ENCODE measurements at regions of chr14 and their contacts with region 1.

Region 1: GRCh38 chr14:76876076-76876475 is 49.9 kb downstream of the LRRC74A start:
- DNase-seq: peak; percentile 68
- H3K4me3 ChIP-seq: no peak overlapping the region
- H3K27ac ChIP-seq: no peak overlapping the region
- H3K4me1 ChIP-seq: no peaks in the 10 kb centered on the region
- H3K27me3 ChIP-seq: no peaks in the 10 kb centered on the region
- CTCF ChIP-seq: peak; percentile 92 to 94
- POLR2A ChIP-seq: no peak

Region 2: GRCh38 chr14:76863724-76864407 is 12.2 kb before region 1 on chr14:
- CTCF ChIA-PET with region 1: interaction called, 13 read pairs
- POLR2A ChIA-PET with region 1: no interaction called
- dilution Hi-C with region 1: no loop called
- intact Hi-C with region 1: no loop called
- DNase-seq: peak; percentile 43
- H3K4me3 ChIP-seq: no peak overlapping the region
- H3K27ac ChIP-seq: no peak overlapping the region
- H3K4me1 ChIP-seq: peaks cover 12% of the 10 kb centered on the region
- H3K27me3 ChIP-seq: peaks cover 3% of the 10 kb centered on the region in 2 experiments
- CTCF ChIP-seq: no peak
- POLR2A ChIP-seq: no peak

Region 3: DNA sequence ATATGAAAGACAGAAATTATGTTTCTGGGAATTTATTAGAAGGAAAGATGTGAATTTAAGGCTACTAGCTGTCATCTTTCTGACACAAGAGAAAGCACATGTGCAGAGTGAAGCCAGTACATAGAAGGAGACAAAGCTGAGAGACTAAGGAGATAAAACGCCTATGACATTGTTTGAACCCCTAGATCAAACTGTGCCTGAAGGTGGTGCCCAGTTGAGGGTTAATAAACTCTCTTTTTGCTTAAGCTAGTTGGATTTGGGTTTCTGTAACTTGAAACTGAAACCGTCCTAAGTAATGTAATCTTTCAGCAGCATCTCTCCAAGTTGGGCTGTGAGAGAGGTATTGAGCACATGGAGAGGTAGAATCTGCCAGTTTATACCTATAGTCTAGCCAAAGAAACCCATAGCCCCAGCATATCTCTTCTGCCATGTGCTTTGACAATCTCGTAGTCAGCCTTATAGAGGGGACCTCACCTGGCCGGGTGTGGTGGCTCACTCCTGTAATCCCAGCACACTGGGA is 34.4 kb after region 1 on chr14:
- CTCF ChIA-PET with region 1: interaction called, 43 read pairs
- POLR2A ChIA-PET with region 1: interaction called, 12 read pairs
- dilution Hi-C with region 1: no loop called
- intact Hi-C with region 1: loop called (anchors 1 kb)
- DNase-seq: no peak
- H3K4me3 ChIP-seq: no peak overlapping the region
- H3K27ac ChIP-seq: no peak overlapping the region
- H3K4me1 ChIP-seq: peaks cover 3% of the 10 kb centered on the region
- H3K27me3 ChIP-seq: no peaks in the 10 kb centered on the region
- CTCF ChIP-seq: no peak
- POLR2A ChIP-seq: no peak

Region 4: DNA sequence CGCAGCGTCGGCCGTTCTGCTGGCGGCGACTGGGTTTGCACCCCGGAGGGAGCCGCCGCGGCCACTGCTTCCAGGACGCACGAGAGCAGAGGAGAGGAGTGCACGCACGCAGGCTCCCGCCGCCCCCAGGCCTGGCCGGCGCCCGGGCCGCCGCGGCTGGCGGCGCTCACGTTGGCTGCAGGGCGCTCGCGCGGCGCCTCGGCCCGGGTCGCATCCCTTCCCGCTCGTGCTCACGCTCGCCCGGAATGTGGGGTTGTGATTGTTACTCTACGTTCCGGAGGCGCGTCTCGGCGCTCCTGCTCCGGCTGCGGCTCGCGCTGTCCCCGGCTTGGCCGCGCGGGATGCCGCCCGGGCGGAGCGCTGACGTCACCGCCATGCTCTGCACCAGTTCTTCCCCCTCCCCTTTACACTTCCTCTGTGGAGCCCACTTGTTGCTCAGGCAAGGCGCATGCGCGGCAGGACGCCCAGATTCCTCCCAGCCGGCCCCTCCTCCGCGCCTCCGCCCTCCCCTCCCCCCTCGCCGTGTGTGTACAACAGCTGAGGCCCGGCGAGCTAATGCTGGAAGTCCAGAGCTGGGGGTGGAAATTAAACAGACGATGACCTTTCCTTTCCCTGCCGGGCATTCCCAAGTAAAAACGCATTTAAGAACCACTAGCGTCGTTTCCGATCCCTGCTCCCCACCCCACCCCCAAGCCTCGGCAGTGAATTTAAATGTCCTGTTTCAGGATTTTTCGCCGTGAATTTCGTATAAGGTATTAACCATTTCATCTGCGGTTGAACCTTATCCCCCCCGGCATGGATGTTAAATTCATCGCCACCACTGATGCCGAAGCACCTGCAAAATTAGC is 152.5 kb after region 1 on chr14 and contains the start of gene IRF2BPL:
- CTCF ChIA-PET with region 1: interaction called, 14 read pairs
- POLR2A ChIA-PET with region 1: no interaction called
- dilution Hi-C with region 1: no loop called
- intact Hi-C with region 1: no loop called
- DNase-seq: peak; percentile 99
- H3K4me3 ChIP-seq: peak within 1 kb of the TSS; percentile 24 to 90 (median 54)
- H3K27ac ChIP-seq: peak within 1 kb of the TSS; percentile 93
- H3K4me1 ChIP-seq: peaks cover 48% of the 10 kb centered on the region
- H3K27me3 ChIP-seq: no peaks in the 10 kb centered on the region
- CTCF ChIP-seq: no peak
- POLR2A ChIP-seq: peak; percentile 96
- total RNA-seq, gene IRF2BPL: 23.1 and 23.3 TPM in 2 replicates

Region 5: GRCh38 chr14:77067632-77068514 is 191.8 kb after region 1 on chr14:
- CTCF ChIA-PET with region 1: interaction called, 450 read pairs
- POLR2A ChIA-PET with region 1: no interaction called
- dilution Hi-C with region 1: no loop called
- intact Hi-C with region 1: loop called (anchors 1 kb)
- DNase-seq: peak; percentile 61
- H3K4me3 ChIP-seq: no peak overlapping the region
- H3K27ac ChIP-seq: no peak overlapping the region
- H3K4me1 ChIP-seq: no peaks in the 10 kb centered on the region
- H3K27me3 ChIP-seq: peaks cover 0 to 2% of the 10 kb centered on the region in 2 experiments
- CTCF ChIP-seq: peak; percentile 90 to 91
- POLR2A ChIP-seq: no peak

Region 6: DNA sequence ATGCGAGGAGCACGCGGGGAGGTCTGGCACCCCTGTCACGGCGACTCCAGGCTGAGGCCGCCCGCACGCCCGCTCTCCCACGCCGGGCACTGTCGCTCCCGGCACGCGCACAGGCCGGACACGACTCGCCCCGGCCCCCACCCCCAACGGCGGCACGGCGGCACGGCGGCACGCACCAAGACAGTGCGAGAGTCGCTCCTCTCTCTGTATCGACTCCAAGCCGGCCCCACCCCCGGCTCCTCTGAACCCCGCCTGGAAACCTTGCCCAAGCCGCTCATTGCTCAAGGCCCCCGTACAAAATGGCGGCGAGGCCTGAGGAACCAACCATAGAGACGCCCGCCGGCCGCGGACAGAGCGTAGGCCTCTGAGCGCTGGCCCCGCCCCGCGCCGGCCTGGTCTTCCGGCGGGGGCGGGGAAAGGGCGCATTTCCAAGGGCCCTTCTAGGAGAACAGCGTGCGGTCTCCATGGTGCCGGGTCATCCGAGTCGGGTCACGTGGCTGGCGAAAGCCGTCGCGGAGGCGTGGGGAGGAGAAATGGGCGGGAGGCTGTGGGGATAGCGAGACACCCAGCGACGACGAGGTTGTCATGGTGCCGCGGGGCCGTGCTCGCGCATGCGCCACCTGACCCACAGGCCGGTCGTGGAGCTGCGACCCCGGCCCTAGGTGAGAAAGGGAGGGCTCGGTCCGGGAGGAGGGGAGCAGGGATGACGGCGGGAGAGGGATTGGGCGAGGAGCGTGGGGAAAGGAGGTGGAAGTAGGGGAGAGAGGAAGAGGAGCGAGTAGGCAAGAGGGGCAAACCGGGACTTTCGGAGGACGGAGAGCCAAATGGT is 221.8 kb after region 1 on chr14 and contains the start of gene CIPC:
- CTCF ChIA-PET with region 1: interaction called, 312 read pairs
- POLR2A ChIA-PET with region 1: no interaction called
- dilution Hi-C with region 1: loop called (anchors 25 kb)
- intact Hi-C with region 1: loop called (anchors 1 kb)
- DNase-seq: peak; percentile 99
- H3K4me3 ChIP-seq: peak within 1 kb of the TSS; percentile 30 to 72 (median 66)
- H3K27ac ChIP-seq: peak within 1 kb of the TSS; percentile 57
- H3K4me1 ChIP-seq: peaks cover 27% of the 10 kb centered on the region
- H3K27me3 ChIP-seq: no peaks in the 10 kb centered on the region
- CTCF ChIP-seq: no peak
- POLR2A ChIP-seq: no peak
- total RNA-seq, gene CIPC: 17.4 and 17.7 TPM in 2 replicates

Region 7: DNA sequence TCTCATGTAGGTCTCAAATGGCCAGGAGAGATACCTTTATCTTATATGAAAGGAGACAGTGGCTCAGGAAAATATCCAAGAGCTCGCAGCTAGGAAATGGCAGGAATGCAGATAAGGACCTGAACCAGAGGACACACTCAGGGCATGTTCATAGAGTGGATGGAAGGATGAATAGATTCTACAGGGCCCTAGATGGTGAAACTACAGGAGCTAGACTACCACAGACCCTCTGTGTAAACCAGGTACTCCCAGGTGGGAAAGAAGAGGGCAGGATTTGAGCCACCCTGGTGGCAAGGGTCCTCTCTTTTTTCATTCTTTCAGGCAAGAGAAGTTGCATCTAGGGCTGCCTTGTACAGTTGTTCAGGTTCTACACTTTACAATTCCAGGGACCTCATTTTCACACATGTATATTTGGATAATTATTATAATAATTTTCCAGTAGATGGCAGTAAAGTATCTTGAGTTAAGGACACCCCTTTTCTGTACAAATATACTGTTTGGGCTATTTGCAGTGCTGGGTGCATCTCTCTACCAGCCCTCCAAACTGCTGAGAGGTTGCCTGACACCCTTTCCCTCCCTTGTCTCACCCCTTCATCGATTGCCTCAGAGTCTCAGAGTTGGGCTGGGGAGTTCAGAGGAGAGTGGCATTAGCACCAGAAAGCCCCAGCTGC is 276.0 kb after region 1 on chr14:
- CTCF ChIA-PET with region 1: interaction called, 166 read pairs
- POLR2A ChIA-PET with region 1: no interaction called
- dilution Hi-C with region 1: no loop called
- intact Hi-C with region 1: loop called (anchors 1 kb)
- DNase-seq: peak; percentile 28
- H3K4me3 ChIP-seq: no peak overlapping the region
- H3K27ac ChIP-seq: no peak overlapping the region
- H3K4me1 ChIP-seq: no peaks in the 10 kb centered on the region
- H3K27me3 ChIP-seq: peaks cover 11 to 19% of the 10 kb centered on the region in 2 experiments
- CTCF ChIP-seq: no peak
- POLR2A ChIP-seq: no peak